B cell (primary cell): ENCODE measurements at regions of chr9 and their contacts with region 1.

Region 1: GRCh38 chr9:35603987-35604577 is 980 bp upstream of the TESK1 start:
- DNase-seq: peak; percentile 100
- ATAC-seq: peak; percentile 86
- H3K4me3 ChIP-seq: peak overlapping the region; percentile 71 to 84 (median 81)
- H3K4me3 Mint-ChIP-seq: peak overlapping the region; percentile 97
- H3K27ac ChIP-seq: peak overlapping the region; percentile 80 to 84
- H3K27ac Mint-ChIP-seq: peak overlapping the region; percentile 99
- H3K4me1 ChIP-seq: peaks cover 26 to 46% of the 10 kb centered on the region in 2 donors
- H3K4me1 Mint-ChIP-seq: peaks cover 36% of the 10 kb centered on the region
- H3K27me3 ChIP-seq: no peaks in the 10 kb centered on the region
- H3K27me3 Mint-ChIP-seq: no peaks in the 10 kb centered on the region
- CTCF ChIP-seq: peak; percentile 97

Region 2: DNA sequence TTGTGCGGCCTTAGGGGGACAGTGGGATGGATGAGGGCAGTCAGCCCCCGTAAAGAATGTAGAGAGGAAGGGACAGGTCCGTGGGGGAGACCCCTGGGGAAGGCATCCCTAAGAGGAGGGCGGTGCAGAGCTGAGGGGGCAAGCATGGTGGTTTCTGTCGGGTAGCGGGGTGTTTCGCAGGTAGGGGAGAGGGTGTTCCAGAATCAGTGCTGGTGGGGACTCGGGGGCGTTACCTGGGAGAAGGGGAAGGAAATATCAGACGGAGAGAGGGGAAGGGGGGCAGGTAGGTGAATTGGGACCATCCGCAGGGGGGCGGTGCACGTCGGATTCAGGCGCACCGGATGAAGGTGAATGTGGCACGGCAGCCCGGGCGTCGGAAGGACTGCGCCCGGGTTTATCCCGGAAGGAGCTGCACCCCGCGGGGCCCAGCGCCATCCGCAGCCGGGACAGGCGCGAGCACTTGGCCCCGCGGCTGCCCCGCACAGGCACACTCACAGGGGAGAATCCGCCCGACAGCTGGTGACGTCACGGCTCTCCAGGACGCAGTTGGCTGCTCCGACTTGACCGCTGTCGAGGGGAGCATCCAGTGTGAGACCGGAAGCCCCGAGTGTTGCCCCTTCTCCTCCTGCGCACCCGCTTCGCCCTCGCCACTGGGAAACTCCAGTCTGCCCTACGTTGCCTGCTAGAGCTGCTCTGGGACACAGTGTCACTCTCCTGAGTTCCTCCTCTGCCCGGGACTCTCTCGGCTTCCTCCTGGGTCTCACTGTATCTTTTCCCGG is 12.8 kb after region 1 on chr9:
- CTCF ChIA-PET with region 1: interaction called, 49 read pairs
- POLR2A ChIA-PET with region 1: interaction called, 30 read pairs
- intact Hi-C with region 1: loop called (anchors 1 kb)
- DNase-seq: peak; percentile 82
- ATAC-seq: peak; percentile 11
- H3K4me3 ChIP-seq: peak overlapping the region; percentile 80 to 91 (median 90)
- H3K4me3 Mint-ChIP-seq: peak overlapping the region; percentile 86
- H3K27ac ChIP-seq: peak overlapping the region; percentile 95 to 97
- H3K27ac Mint-ChIP-seq: peak overlapping the region; percentile 86
- H3K4me1 ChIP-seq: peaks cover 79 to 95% of the 10 kb centered on the region in 2 donors
- H3K4me1 Mint-ChIP-seq: peaks cover 94% of the 10 kb centered on the region
- H3K27me3 ChIP-seq: no peaks in the 10 kb centered on the region
- H3K27me3 Mint-ChIP-seq: no peaks in the 10 kb centered on the region
- CTCF ChIP-seq: peak; percentile 21

Region 3: GRCh38 chr9:35716230-35716629 is 112.1 kb after region 1 on chr9:
- CTCF ChIA-PET with region 1: interaction called, 3 read pairs
- POLR2A ChIA-PET with region 1: interaction called, 3 read pairs
- intact Hi-C with region 1: loop called (anchors 1 kb)
- DNase-seq: no peak
- ATAC-seq: no peak
- H3K4me3 ChIP-seq: no peak overlapping the region
- H3K4me3 Mint-ChIP-seq: no peak overlapping the region
- H3K27ac ChIP-seq: no peak overlapping the region
- H3K27ac Mint-ChIP-seq: peak overlapping the region; percentile 65
- H3K4me1 ChIP-seq: peaks cover 16 to 24% of the 10 kb centered on the region in 2 donors
- H3K4me1 Mint-ChIP-seq: peaks cover 26% of the 10 kb centered on the region
- H3K27me3 ChIP-seq: no peaks in the 10 kb centered on the region
- H3K27me3 Mint-ChIP-seq: no peaks in the 10 kb centered on the region
- CTCF ChIP-seq: no peak

Region 4: GRCh38 chr9:35748858-35749514 is 144.9 kb after region 1 on chr9 and contains the starts of genes GBA2 and RGP1:
- CTCF ChIA-PET with region 1: interaction called, 6 read pairs
- POLR2A ChIA-PET with region 1: interaction called, 4 read pairs
- intact Hi-C with region 1: loop called (anchors 1 kb)
- DNase-seq: peak; percentile 82
- ATAC-seq: peak; percentile 83
- H3K4me3 ChIP-seq: peak within 1 kb of the TSS; percentile 73 to 92 (median 84)
- H3K4me3 Mint-ChIP-seq: peak within 1 kb of the TSS; percentile 96
- H3K27ac ChIP-seq: peak within 1 kb of the TSS; percentile 71 to 77
- H3K27ac Mint-ChIP-seq: peak within 1 kb of the TSS; percentile 96
- H3K4me1 ChIP-seq: peaks cover 37 to 41% of the 10 kb centered on the region in 2 donors
- H3K4me1 Mint-ChIP-seq: peaks cover 50% of the 10 kb centered on the region
- H3K27me3 ChIP-seq: no peaks in the 10 kb centered on the region
- H3K27me3 Mint-ChIP-seq: no peaks in the 10 kb centered on the region
- CTCF ChIP-seq: no peak
- total RNA-seq, gene GBA2: 137 and 158 TPM in 2 replicates
- total RNA-seq, gene RGP1: 42.3 and 44.3 TPM in 2 replicates

Region 5: DNA sequence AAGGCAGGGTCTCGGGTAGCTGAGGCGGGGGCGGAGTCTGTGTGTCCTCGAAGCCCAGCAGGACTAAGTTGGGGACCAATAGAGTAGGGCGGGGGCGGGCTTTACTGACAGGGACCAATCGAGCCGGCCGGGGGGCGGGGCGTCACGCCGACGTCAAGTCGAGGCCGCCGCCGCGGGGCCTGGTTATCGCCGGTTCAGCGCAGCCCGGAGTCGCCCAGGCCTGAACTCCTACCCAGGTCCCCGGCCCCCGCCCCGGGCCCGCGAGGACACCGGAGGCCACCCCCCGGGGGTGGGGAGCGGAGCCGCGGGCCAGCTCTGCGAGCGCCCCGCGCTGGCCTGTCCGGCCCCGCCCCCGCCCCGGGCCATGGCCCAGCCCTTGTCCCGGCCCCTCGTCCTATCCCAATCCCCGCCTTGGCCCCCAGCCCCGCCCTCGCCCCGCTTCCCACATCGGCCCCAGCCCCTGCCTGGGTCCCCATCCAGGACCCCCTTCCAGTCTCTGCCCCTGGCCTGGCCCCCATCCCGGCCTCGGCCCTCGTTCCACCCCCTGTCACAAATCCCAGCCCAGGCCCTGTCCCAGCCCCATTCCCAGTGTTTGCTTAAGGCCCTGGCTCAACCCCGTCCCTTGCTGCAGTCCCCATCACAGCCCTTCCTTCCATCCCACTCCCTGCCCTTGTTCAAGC is 225.1 kb after region 1 on chr9 and contains the start of gene TMEM8B:
- CTCF ChIA-PET with region 1: interaction called, 7 read pairs
- POLR2A ChIA-PET with region 1: no interaction called
- intact Hi-C with region 1: loop called (anchors 1 kb)
- DNase-seq: peak; percentile 94
- ATAC-seq: peak; percentile 92
- H3K4me3 ChIP-seq: peak within 1 kb of the TSS; percentile 32 to 80 (median 78)
- H3K4me3 Mint-ChIP-seq: peak within 1 kb of the TSS; percentile 96
- H3K27ac ChIP-seq: peak within 1 kb of the TSS; percentile 60 to 78
- H3K27ac Mint-ChIP-seq: peak within 1 kb of the TSS; percentile 89
- H3K4me1 ChIP-seq: peaks cover 24 to 35% of the 10 kb centered on the region in 2 donors
- H3K4me1 Mint-ChIP-seq: peaks cover 44% of the 10 kb centered on the region
- H3K27me3 ChIP-seq: no peaks in the 10 kb centered on the region
- H3K27me3 Mint-ChIP-seq: no peaks in the 10 kb centered on the region
- CTCF ChIP-seq: no peak
- total RNA-seq, gene TMEM8B: 13.6 and 14.5 TPM in 2 replicates

Region 6: DNA sequence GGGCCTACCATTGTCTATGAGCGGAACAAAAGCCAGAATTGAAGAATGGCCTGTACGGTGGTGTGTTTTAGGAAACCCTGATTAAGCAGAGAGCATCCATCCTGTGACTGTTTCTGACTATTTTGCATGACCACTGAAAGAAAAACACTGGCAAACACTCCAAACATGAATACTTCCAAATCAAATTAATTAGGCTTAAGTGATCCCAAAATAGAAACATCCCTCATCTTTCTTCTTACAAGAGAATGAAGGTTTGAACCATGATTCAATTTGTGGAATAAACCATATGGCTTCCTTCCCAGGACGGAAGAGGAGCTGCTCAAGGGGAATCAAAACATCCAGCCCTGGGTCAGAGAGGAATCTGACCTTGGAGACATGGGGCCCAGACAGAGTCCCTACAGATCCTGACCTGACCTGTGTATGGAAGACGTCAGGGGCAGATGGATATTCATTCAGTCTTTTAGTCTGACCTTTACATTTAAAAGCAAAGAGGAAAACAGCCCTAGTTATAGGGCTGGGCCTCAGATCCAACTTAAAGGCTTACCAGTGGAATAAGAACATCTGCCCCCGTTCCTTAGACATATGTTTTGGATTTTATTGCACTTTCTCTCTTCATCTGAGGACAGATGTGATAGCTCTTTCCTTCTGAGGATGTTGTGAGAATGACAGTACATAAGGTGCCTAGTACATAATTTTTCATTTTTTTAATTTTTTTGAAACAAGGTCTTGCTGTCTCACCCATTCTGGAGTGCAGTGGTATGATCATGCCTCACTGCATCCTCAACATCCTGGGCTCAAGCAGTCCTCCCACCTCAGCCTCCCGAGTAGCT is 415.0 kb after region 1 on chr9:
- CTCF ChIA-PET with region 1: no interaction called
- POLR2A ChIA-PET with region 1: no interaction called
- intact Hi-C with region 1: no loop called
- DNase-seq: no peak
- ATAC-seq: no peak
- H3K4me3 ChIP-seq: no peak overlapping the region
- H3K4me3 Mint-ChIP-seq: no peak overlapping the region
- H3K27ac ChIP-seq: no peak overlapping the region
- H3K27ac Mint-ChIP-seq: no peak overlapping the region
- H3K4me1 ChIP-seq: no peaks in the 10 kb centered on the region
- H3K4me1 Mint-ChIP-seq: no peaks in the 10 kb centered on the region
- H3K27me3 ChIP-seq: peaks cover 0 to 3% (median 0%) of the 10 kb centered on the region in 4 experiments
- H3K27me3 Mint-ChIP-seq: peaks cover 11% of the 10 kb centered on the region
- CTCF ChIP-seq: no peak